Dendritic cell treated with granulocyte-macrophage colony-stimulating factor and Interleukin-4, amounts not matched to agents 40 ng/mL and 50 ng/mL, for 4 days (primary cell): ENCODE measurements at regions of chr10 and their contacts with region 1.

Region 1: GRCh38 chr10:133357285-133358151 is at the start of gene FUOM:
- H3K4me3 Mint-ChIP-seq: peak within 1 kb of the TSS; percentile 80
- H3K27ac Mint-ChIP-seq: peak within 1 kb of the TSS; percentile 80
- H3K4me1 Mint-ChIP-seq: peaks cover 16% of the 10 kb centered on the region
- H3K27me3 Mint-ChIP-seq: no peaks in the 10 kb centered on the region

Region 2: GRCh38 chr10:132939957-132940790 is 417.3 kb before region 1 on chr10:
- intact Hi-C with region 1: no loop called
- H3K4me3 Mint-ChIP-seq: no peak overlapping the region
- H3K27ac Mint-ChIP-seq: no peak overlapping the region
- H3K4me1 Mint-ChIP-seq: peaks cover 6% of the 10 kb centered on the region
- H3K27me3 Mint-ChIP-seq: peaks cover 67% of the 10 kb centered on the region

Region 3: GRCh38 chr10:133261726-133262325 is 95.7 kb before region 1 on chr10:
- intact Hi-C with region 1: no loop called
- H3K4me3 Mint-ChIP-seq: peak overlapping the region; percentile 76
- H3K27ac Mint-ChIP-seq: peak overlapping the region; percentile 100
- H3K4me1 Mint-ChIP-seq: peaks cover 89% of the 10 kb centered on the region
- H3K27me3 Mint-ChIP-seq: no peaks in the 10 kb centered on the region

Region 4: GRCh38 chr10:133378251-133379096 is 21.0 kb after region 1 on chr10:
- intact Hi-C with region 1: loop called (anchors 2 kb)
- H3K4me3 Mint-ChIP-seq: peak overlapping the region; percentile 79
- H3K27ac Mint-ChIP-seq: peak overlapping the region; percentile 93
- H3K4me1 Mint-ChIP-seq: peaks cover 64% of the 10 kb centered on the region
- H3K27me3 Mint-ChIP-seq: peaks cover 4% of the 10 kb centered on the region

Region 5: GRCh38 chr10:133394064-133394663 is 36.6 kb after region 1 on chr10 and contains the start of gene MTG1:
- intact Hi-C with region 1: loop called (anchors 5 kb)
- H3K4me3 Mint-ChIP-seq: peak within 1 kb of the TSS; percentile 88
- H3K27ac Mint-ChIP-seq: peak within 1 kb of the TSS; percentile 93
- H3K4me1 Mint-ChIP-seq: peaks cover 59% of the 10 kb centered on the region
- H3K27me3 Mint-ChIP-seq: no peaks in the 10 kb centered on the region

Region 6: DNA sequence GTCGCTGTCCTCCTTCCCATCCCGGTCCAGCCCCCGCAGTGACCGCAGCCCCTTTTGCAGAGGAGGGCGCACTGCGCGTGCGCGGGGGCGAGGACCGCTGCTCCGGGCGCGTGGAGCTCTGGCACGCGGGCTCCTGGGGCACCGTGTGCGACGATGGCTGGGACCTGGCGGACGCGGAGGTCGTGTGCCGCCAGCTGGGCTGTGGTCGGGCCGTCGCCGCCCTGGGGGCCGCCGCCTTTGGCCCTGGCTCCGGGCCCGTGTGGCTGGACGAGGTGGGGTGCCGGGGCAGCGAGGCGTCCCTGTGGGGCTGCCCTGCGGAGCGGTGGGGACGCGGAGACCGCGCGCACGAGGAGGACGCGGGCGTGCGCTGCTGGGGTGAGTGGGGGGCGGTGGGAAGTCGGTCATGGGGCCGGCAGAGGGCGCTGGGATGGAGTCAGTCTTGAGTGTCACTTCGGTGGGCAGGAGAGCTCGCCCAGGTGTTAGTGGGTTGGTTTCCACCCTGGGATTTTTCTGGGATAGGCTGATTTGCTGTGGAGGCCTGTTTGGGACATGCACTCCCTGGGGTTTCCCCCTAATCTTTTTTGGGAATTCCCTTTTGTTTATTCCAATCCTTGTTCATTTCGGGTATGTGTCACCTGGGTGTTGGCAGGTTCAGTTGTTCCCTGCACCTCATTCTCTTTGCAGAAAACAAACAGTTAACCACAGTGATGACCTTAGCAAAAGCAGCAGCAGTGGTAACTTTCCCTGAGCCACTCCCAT is 107.9 kb after region 1 on chr10:
- intact Hi-C with region 1: no loop called
- H3K4me3 Mint-ChIP-seq: no peak overlapping the region
- H3K27ac Mint-ChIP-seq: no peak overlapping the region
- H3K4me1 Mint-ChIP-seq: no peaks in the 10 kb centered on the region
- H3K27me3 Mint-ChIP-seq: peaks cover 5% of the 10 kb centered on the region